Keratinocyte (primary cell): ENCODE measurements at regions of chr4 and their contacts with region 1.

Region 1: GRCh38 chr4:142549726-142550463 is 296.2 kb downstream of the INPP4B start:
- DNase-seq: peak; percentile 87
- H3K4me3 ChIP-seq: peak overlapping the region; percentile 8 to 43 (median 39)
- H3K27ac ChIP-seq: peak overlapping the region; percentile 99
- H3K4me1 ChIP-seq: peaks cover 47% of the 10 kb centered on the region
- H3K27me3 ChIP-seq: no peaks in the 10 kb centered on the region
- CTCF ChIP-seq: peak in 1 of 3 experiments; percentile 29

Region 2: GRCh38 chr4:142379277-142380057 is 170.4 kb before region 1 on chr4:
- dilution Hi-C with region 1: loop called (anchors 25 kb)
- DNase-seq: no peak
- H3K4me3 ChIP-seq: peak overlapping the region in 2 of 3 experiments; percentile 36 to 49
- H3K27ac ChIP-seq: peak overlapping the region; percentile 91
- H3K4me1 ChIP-seq: peaks cover 52% of the 10 kb centered on the region
- H3K27me3 ChIP-seq: no peaks in the 10 kb centered on the region
- CTCF ChIP-seq: no peak

Region 3: GRCh38 chr4:142752202-142752786 is 202.4 kb after region 1 on chr4:
- dilution Hi-C with region 1: no loop called
- DNase-seq: no peak
- H3K4me3 ChIP-seq: no peak overlapping the region
- H3K27ac ChIP-seq: no peak overlapping the region
- H3K4me1 ChIP-seq: no peaks in the 10 kb centered on the region
- H3K27me3 ChIP-seq: no peaks in the 10 kb centered on the region
- CTCF ChIP-seq: no peak